ENCODE measurements at regions of chr1 and their contacts with region 1.

Region 1: DNA sequence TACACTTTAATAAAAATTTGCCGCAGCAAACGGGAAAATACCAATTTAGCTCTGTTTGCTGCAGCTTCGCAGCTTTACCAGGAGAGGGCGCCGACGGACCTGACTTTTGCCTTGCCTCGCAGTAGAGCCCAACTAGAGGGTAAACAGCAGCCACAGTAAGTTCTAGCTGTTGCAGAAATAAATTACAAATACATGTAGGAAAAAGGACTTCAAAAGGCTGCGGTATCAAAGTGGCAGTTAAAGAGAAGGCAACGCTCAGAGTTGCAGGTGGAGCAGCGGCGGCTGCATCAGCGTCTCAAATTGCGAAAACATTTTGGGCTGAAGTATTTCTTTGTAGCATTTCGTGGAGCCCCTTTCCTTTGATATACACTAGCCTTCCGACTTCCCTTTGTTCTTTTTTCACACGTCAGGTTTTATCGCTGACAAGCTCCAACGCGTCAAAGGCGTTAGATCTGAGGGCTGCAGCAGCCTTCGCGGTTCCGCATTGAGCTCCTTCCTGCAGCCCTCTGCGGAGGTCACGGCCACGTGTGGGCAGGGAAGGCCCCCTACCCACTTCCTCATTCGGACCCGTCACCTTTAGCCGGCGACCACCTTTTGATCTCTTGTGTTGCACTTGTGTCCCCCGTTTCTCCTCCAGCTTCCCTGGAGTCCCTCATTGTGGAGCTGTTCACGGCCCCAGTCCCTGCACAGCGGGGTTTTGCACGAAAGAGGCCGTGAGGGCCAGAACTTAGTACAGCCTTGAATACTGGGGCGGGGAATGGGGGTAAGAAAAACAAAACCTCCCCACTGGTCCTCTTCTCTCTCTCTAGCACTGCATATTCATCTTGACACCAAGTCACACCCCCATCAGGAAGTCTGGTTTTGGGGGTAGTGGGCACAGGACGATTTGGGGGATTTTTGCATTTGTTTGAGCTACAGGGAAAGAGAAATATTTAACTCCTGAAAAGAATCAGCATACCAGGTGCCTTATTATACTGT is 72.8 kb downstream of the S1PR1 start:
- DNase-seq: no peak
- H3K4me3 ChIP-seq: peak overlapping the region; percentile 43 to 56 (median 46)
- H3K27ac ChIP-seq: no peak overlapping the region
- H3K4me1 ChIP-seq: peaks cover 6 to 13% (median 10%) of the 10 kb centered on the region in 4 donors
- H3K27me3 ChIP-seq: peaks cover 0 to 4% (median 0%) of the 10 kb centered on the region in 4 donors
- CTCF ChIP-seq: peak; percentile 76 to 82 (median 76)
- EP300 ChIP-seq: no peak
- POLR2A ChIP-seq: no peak

Region 2: DNA sequence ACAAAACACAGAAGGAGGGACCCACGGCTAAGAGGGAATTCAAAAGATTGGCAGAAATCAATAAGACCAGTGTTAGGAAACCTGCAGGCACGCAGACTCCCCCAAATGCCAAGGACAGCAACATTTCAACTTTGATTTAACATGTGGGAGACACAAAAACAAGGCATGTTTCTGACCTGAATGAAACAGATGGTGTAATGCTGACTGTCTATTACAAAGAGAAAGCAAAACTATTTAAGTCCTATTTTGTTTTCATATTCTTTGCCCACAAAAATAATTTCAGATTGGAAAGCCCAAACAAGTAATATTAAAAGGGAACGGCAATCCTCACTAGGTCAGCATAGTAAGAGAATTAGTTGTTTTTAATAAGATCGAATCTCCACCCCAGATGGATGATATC is 35.1 kb after region 1 on chr1:
- intact Hi-C with region 1: loop called (anchors 5 kb)
- DNase-seq: peak; percentile 45
- H3K4me3 ChIP-seq: no peak overlapping the region
- H3K27ac ChIP-seq: no peak overlapping the region
- H3K4me1 ChIP-seq: no peaks in the 10 kb centered on the region
- H3K27me3 ChIP-seq: no peaks in the 10 kb centered on the region
- CTCF ChIP-seq: no peak
- EP300 ChIP-seq: no peak
- POLR2A ChIP-seq: no peak

Region 3: DNA sequence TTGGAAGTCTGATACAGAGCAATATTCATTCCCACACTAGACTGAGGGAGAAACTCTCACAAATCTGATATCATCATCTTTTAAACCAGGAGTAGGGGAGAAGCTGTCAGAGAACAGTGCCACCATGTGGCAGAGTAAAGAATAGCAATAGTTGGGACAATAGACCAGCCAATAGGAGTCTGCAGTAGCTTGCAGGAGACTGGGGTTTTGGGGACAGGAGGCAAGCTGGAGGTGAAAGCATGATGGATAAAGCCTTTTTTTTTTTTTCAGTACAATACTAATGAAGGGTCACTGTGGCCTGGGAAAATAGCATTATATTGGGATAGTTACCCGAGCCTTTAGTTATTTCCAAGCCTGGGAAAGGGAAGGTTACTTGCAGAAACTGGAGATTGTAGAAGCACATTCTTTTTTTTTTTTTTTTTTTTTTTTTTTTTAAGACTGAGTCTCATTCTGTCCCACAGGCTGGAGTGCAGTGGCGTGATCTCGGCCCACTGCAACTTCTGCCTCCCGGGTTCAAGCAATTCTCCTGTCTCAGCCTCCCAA is 47.9 kb after region 1 on chr1:
- intact Hi-C with region 1: loop called (anchors 5 kb)
- DNase-seq: peak; percentile 90
- H3K4me3 ChIP-seq: no peak overlapping the region
- H3K27ac ChIP-seq: no peak overlapping the region
- H3K4me1 ChIP-seq: peaks cover 0 to 5% (median 0%) of the 10 kb centered on the region in 4 donors
- H3K27me3 ChIP-seq: no peaks in the 10 kb centered on the region
- CTCF ChIP-seq: peak; percentile 68 to 84 (median 75)
- EP300 ChIP-seq: no peak
- POLR2A ChIP-seq: no peak

Measured in esophagus muscularis mucosa (tissue), 4 donors.